Activated naive CD4-positive, alpha-beta T cell treated with anti-CD3 and anti-CD28 coated beads for 36 hours (primary cell): ENCODE measurements at regions of chr3 and their contacts with region 1.

Region 1: GRCh38 chr3:15636003-15636709 is 34.6 kb downstream of the BTD start:
- DNase-seq: peak; percentile 74
- H3K4me3 Mint-ChIP-seq: no peak overlapping the region
- H3K27ac Mint-ChIP-seq: peak overlapping the region; percentile 69
- H3K4me1 Mint-ChIP-seq: peaks cover 52% of the 10 kb centered on the region
- H3K27me3 Mint-ChIP-seq: no peaks in the 10 kb centered on the region

Region 2: GRCh38 chr3:15361494-15362212 is 274.5 kb before region 1 on chr3:
- CTCF ChIA-PET with region 1: no interaction called
- intact Hi-C with region 1: loop called (anchors 5 kb)
- DNase-seq: peak; percentile 86
- H3K4me3 Mint-ChIP-seq: no peak overlapping the region
- H3K27ac Mint-ChIP-seq: peak overlapping the region; percentile 83
- H3K4me1 Mint-ChIP-seq: peaks cover 42% of the 10 kb centered on the region
- H3K27me3 Mint-ChIP-seq: peaks cover 2% of the 10 kb centered on the region

Region 3: GRCh38 chr3:15578289-15578867 is 57.8 kb before region 1 on chr3:
- CTCF ChIA-PET with region 1: no interaction called
- intact Hi-C with region 1: no loop called
- DNase-seq: no peak
- H3K4me3 Mint-ChIP-seq: no peak overlapping the region
- H3K27ac Mint-ChIP-seq: no peak overlapping the region
- H3K4me1 Mint-ChIP-seq: no peaks in the 10 kb centered on the region
- H3K27me3 Mint-ChIP-seq: no peaks in the 10 kb centered on the region

Region 4: GRCh38 chr3:15667484-15667883 is 31.3 kb after region 1 on chr3:
- CTCF ChIA-PET with region 1: interaction called, 3 read pairs
- intact Hi-C with region 1: loop called (anchors 2 kb)
- DNase-seq: peak; percentile 60
- H3K4me3 Mint-ChIP-seq: no peak overlapping the region
- H3K27ac Mint-ChIP-seq: peak overlapping the region; percentile 30
- H3K4me1 Mint-ChIP-seq: peaks cover 20% of the 10 kb centered on the region
- H3K27me3 Mint-ChIP-seq: no peaks in the 10 kb centered on the region

Region 5: DNA sequence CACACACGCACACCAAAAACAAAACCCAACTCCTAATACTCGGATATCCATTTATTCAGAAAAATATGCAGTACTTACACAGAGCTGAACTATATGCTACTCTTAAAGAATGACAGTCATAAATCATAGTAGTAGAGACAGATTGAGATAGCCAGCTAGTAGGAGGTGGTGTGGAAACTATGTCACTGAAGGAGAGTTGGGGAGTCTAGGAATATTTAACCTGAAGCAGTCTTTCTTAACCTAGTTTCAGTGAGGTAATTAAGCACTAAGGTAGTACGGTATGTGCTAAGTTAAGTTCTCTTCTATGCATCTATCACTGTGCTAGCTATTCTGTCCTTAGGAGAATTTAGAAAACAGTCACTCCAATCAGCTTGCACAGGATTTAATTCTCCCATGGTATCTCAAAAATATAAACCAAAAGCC is 107.4 kb after region 1 on chr3:
- CTCF ChIA-PET with region 1: no interaction called
- intact Hi-C with region 1: loop called (anchors 2 kb)
- DNase-seq: no peak
- H3K4me3 Mint-ChIP-seq: no peak overlapping the region
- H3K27ac Mint-ChIP-seq: no peak overlapping the region
- H3K4me1 Mint-ChIP-seq: peaks cover 37% of the 10 kb centered on the region
- H3K27me3 Mint-ChIP-seq: no peaks in the 10 kb centered on the region

Region 6: GRCh38 chr3:15768421-15769255 is 132.5 kb after region 1 on chr3:
- CTCF ChIA-PET with region 1: no interaction called
- intact Hi-C with region 1: loop called (anchors 2 kb)
- DNase-seq: peak; percentile 7
- H3K4me3 Mint-ChIP-seq: no peak overlapping the region
- H3K27ac Mint-ChIP-seq: peak overlapping the region; percentile 11
- H3K4me1 Mint-ChIP-seq: peaks cover 40% of the 10 kb centered on the region
- H3K27me3 Mint-ChIP-seq: no peaks in the 10 kb centered on the region

Region 7: DNA sequence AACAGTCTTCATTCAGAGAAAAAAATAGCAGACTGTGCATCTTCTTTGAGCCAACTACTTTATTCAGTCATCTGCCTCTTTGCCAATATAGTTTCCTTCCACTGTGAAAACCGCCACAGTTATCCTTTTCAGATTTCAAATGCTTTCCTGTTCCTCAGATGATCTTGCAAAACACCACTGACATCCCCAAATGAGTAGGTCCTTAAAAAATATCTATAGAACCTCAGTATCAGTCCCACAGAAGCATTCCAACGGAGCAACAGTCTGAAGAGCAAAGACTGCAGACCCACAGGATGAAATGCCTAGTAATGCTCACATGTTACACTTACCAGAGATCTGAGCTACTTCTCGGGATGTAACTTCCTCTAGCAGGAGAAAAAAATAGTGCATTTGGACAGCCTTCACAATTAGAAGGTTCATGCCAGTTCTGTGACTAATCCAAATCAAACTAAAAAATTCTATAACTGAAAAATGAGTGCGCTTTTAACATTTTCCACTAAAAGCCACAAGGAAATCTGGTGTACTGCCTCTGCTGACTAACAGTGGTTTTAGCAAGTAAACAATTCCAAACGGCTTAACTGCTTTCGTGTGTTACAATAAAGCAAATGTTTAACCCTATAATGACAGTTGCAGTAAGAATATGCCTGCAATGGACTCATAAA is 161.6 kb after region 1 on chr3 and contains the start of gene ANKRD28:
- CTCF ChIA-PET with region 1: interaction called, 8 read pairs
- intact Hi-C with region 1: loop called (anchors 1 kb)
- DNase-seq: no peak
- H3K4me3 Mint-ChIP-seq: peak within 1 kb of the TSS; percentile 33
- H3K27ac Mint-ChIP-seq: peak within 1 kb of the TSS; percentile 48
- H3K4me1 Mint-ChIP-seq: peaks cover 70% of the 10 kb centered on the region
- H3K27me3 Mint-ChIP-seq: no peaks in the 10 kb centered on the region
- total RNA-seq, gene ANKRD28: 21.4 to 23.6 TPM